GM12878 (cell line): ENCODE measurements at regions of chr3 and their contacts with region 1.

Region 1: GRCh38 chr3:114290911-114291901 is 2.6 kb upstream of the TIGIT start:
- DNase-seq: peak; percentile 79
- ATAC-seq: peak; percentile 95
- H3K4me3 ChIP-seq: no peak overlapping the region
- H3K27ac ChIP-seq: peak overlapping the region; percentile 88
- H3K4me1 ChIP-seq: peaks cover 18% of the 10 kb centered on the region
- H3K27me3 ChIP-seq: no peaks in the 10 kb centered on the region
- CTCF ChIP-seq: peak; percentile 92 to 93 (median 93)
- EP300 ChIP-seq: peak; percentile 60 to 79; a peak in 2 of 4 replicates
- POLR2A ChIP-seq: peak; percentile 55
- RAD21 ChIP-seq: peak; percentile 97

Region 2: DNA sequence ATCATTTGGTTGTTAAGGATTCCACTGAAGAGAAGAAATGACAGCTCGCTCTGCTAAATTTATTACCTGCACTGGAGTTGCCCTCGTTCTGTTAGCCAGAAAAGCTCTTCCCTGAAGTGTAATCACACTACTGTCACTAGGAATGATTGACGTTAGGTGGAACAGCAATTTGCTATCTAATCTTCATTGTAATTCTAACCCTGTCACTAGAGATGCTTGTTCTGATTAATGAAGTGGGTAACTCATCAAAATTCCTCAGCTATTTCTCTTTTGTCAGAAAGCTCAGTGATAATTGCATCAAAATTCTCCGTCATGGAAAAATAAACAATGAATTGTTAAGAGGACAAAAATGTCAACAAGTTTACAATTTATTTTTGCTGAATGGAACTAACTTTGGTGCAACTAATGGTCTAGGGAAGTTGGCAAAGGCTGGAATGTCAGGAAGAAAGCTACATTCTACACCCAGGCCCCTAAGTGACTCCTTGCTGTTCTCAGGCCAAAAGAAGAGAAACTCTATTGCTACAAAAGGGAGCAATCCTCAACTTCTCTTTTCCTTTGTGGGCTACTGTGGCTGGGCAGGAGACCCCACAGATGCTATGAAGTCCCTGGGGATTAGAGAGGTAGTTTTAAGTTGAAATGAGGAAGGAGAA is 268.9 kb before region 1 on chr3:
- CTCF ChIA-PET with region 1: no interaction called
- POLR2A ChIA-PET with region 1: no interaction called
- RAD21 ChIA-PET with region 1: no interaction called
- SMC1A ChIA-PET with region 1: no interaction called
- in situ Hi-C with region 1: no loop called
- intact Hi-C with region 1: no loop called
- DNase-seq: no peak
- ATAC-seq: no peak
- H3K4me3 ChIP-seq: no peak overlapping the region
- H3K27ac ChIP-seq: no peak overlapping the region
- H3K4me1 ChIP-seq: no peaks in the 10 kb centered on the region
- H3K27me3 ChIP-seq: no peaks in the 10 kb centered on the region
- CTCF ChIP-seq: no peak
- EP300 ChIP-seq: no peak
- POLR2A ChIP-seq: no peak
- RAD21 ChIP-seq: no peak

Region 3: DNA sequence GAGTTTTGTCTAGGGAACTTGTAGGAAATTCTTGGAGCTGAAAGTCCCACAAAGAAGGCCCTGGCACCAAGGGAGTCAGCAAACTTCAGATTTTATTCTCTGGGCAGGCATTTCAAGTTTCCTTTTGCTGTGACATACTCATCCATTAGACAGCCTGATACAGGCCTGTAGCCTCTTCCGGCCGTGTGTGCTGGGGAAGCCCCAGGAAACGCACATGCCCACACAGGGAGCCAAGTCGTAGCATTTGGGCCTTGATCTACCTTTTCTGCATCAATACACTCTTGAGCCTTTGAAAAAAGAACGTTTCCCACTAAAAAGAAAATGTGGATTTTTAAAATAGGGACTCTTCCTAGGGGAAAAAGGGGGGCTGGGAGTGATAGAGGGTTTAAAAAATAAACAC is 17.6 kb after region 1 on chr3:
- CTCF ChIA-PET with region 1: interaction called, 78 read pairs
- POLR2A ChIA-PET with region 1: interaction called, 7 read pairs
- RAD21 ChIA-PET with region 1: interaction called, 35 read pairs
- SMC1A ChIA-PET with region 1: interaction called, 73 read pairs
- in situ Hi-C with region 1: no loop called
- intact Hi-C with region 1: no loop called
- DNase-seq: no peak
- ATAC-seq: peak; percentile 97
- H3K4me3 ChIP-seq: no peak overlapping the region
- H3K27ac ChIP-seq: peak overlapping the region; percentile 57
- H3K4me1 ChIP-seq: peaks cover 32% of the 10 kb centered on the region
- H3K27me3 ChIP-seq: no peaks in the 10 kb centered on the region
- CTCF ChIP-seq: no peak
- EP300 ChIP-seq: no peak
- POLR2A ChIP-seq: 0 out of 2 replicates have a peak, but pooled peaks have one; percentile 44
- RAD21 ChIP-seq: no peak

Region 4: DNA sequence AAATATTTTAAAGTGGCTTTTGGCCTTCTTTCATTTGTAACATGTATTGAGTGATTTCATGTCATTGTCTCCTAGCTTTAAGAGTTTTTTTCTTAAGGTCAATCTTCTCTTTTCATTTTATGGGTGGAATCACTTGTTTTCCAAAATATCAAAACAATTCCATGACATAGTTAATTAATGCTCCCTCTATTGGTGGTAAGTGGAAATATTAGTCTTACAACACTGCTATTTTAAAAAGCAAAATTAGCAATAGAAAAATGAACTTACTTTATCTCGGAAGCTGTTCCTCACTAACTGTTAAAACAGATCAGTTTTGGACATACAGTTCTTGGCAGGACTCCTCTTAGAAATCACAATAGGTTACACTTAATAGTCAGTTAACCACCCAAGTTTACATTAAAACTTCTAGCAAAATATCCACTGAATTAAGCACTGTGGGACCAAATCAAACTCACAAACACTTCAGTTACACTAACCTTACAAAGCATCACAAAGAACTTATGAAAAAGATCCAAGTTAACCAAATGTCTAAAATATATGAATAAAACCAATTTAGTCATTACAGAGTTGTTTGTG is 45.0 kb after region 1 on chr3:
- CTCF ChIA-PET with region 1: interaction called, 32 read pairs
- POLR2A ChIA-PET with region 1: interaction called, 3 read pairs
- RAD21 ChIA-PET with region 1: interaction called, 38 read pairs
- SMC1A ChIA-PET with region 1: interaction called, 54 read pairs
- in situ Hi-C with region 1: no loop called
- intact Hi-C with region 1: loop called (anchors 2 kb)
- DNase-seq: no peak
- ATAC-seq: no peak
- H3K4me3 ChIP-seq: no peak overlapping the region
- H3K27ac ChIP-seq: no peak overlapping the region
- H3K4me1 ChIP-seq: peaks cover 14% of the 10 kb centered on the region; the same call in 1 of the 2 replicates
- H3K27me3 ChIP-seq: no peaks in the 10 kb centered on the region
- CTCF ChIP-seq: peak; percentile 19 to 33 (median 30); a peak in 4 of 6 replicates
- EP300 ChIP-seq: no peak
- POLR2A ChIP-seq: no peak
- RAD21 ChIP-seq: 0 out of 2 replicates have a peak, but pooled peaks have one; percentile 11

Region 5: DNA sequence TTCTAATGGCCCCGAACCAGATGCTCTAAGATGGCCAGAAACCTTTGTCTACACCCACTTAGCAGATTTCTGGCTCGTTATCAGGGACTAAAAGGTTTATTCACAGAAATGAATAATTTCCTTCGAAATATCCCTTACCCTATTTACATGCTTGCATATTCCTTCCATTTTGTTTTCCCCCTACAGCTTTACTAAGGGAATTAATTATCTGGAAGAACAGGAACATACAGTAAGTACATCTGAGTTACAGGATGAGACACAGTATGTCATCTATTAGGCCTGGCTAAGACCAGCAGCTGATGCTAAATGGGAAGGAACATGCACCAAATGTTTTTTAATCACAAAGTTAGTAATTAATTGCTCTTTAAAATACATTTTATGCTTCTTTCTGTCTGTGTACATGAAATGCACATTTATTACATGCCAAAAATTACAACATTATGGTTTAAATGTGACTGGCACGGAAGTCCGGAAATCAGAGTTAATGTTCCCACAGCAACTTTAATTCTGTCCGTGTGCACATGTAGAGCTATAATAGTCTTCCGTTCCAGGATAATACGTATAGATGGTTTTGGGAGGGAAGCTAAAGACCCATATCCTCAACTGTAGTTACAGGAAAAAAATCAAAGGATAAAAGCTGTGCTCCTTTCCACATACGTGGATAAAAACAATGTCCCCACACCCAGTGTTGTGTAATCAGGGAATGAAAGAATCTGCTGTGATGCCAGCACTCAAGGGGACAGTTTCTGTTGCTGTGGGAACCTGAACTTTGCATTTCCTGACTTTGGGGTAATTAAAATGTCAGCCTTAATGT is 84.6 kb after region 1 on chr3:
- CTCF ChIA-PET with region 1: interaction called, 48 read pairs
- POLR2A ChIA-PET with region 1: no interaction called
- RAD21 ChIA-PET with region 1: interaction called, 15 read pairs
- SMC1A ChIA-PET with region 1: interaction called, 5 read pairs
- in situ Hi-C with region 1: no loop called
- intact Hi-C with region 1: no loop called
- DNase-seq: no peak
- ATAC-seq: no peak
- H3K4me3 ChIP-seq: no peak overlapping the region
- H3K27ac ChIP-seq: no peak overlapping the region
- H3K4me1 ChIP-seq: 0 out of 2 replicates have a peak, but pooled peaks cover 3% of the 10 kb centered on the region
- H3K27me3 ChIP-seq: no peaks in the 10 kb centered on the region
- CTCF ChIP-seq: no peak
- EP300 ChIP-seq: no peak
- POLR2A ChIP-seq: no peak
- RAD21 ChIP-seq: no peak

Region 6: GRCh38 chr3:114411811-114412803 is 120.9 kb after region 1 on chr3:
- CTCF ChIA-PET with region 1: interaction called, 131 read pairs
- POLR2A ChIA-PET with region 1: no interaction called
- RAD21 ChIA-PET with region 1: interaction called, 72 read pairs
- SMC1A ChIA-PET with region 1: interaction called, 110 read pairs
- in situ Hi-C with region 1: loop called (anchors 5 kb)
- intact Hi-C with region 1: no loop called
- DNase-seq: no peak
- ATAC-seq: peak; percentile 72
- H3K4me3 ChIP-seq: peak overlapping the region; percentile 41; the same call in 1 of the 2 replicates
- H3K27ac ChIP-seq: no peak overlapping the region
- H3K4me1 ChIP-seq: peaks cover 9% of the 10 kb centered on the region
- H3K27me3 ChIP-seq: no peaks in the 10 kb centered on the region
- CTCF ChIP-seq: peak in 1 of 3 experiments; percentile 34; a peak in 2 of 6 replicates
- EP300 ChIP-seq: no peak
- POLR2A ChIP-seq: no peak
- RAD21 ChIP-seq: peak; percentile 33; the same call in 1 of the 2 replicates